AG04450 (cell line): ENCODE measurements at regions of chr20 and their contacts with region 1.

Region 1: GRCh38 chr20:38229376-38230252 is 30.9 kb downstream of the KIAA1755 start:
- DNase-seq: no peak
- H3K4me3 ChIP-seq: no peak overlapping the region
- H3K27ac ChIP-seq: no peak overlapping the region
- H3K27me3 ChIP-seq: no peaks in the 10 kb centered on the region
- CTCF ChIP-seq: peak; percentile 68

Region 2: DNA sequence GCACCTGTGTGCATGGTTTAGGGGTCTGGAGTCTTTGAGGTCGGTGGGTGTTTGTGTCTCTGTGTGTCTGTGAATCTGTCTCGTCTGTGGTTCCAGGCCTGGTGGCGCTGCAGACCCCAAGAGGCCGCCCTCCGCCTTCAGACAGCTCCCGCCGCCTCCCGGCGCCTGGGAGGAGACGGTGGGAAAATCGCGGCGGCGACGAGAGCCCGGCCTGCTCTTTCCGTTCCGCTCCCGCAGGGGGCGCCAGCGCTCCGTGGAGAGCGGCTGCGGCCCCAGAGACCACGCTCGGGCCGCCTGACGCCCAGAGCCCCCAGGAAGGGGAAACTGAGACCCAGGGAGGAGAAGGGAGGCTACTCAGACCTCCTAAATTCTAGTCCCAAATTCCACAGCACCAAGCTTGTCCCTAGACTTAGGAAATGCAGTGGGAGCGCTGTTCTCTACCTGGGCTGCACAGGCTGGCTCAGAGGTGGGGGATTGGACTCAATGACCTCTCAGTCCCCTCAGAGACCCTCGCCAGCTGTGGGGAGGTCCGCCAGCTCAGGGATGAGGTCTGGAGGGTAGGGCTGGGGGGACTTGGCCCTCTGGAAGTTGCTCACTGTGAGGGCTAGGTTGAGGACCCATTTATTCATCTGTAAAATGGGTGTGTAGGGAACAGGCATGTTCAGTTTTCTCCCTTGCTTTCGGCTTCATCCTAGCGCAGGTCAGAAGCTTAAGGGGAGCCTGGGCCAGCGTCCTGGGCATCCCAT is 665.1 kb before region 1 on chr20:
- CTCF ChIA-PET with region 1: interaction called, 21 read pairs
- POLR2A ChIA-PET with region 1: no interaction called
- DNase-seq: no peak
- H3K4me3 ChIP-seq: no peak overlapping the region
- H3K27ac ChIP-seq: no peak overlapping the region
- H3K27me3 ChIP-seq: peaks cover 53% of the 10 kb centered on the region
- CTCF ChIP-seq: peak; percentile 90

Region 3: GRCh38 chr20:38290832-38291581 is 61.4 kb after region 1 on chr20:
- CTCF ChIA-PET with region 1: interaction called, 10 read pairs
- POLR2A ChIA-PET with region 1: interaction called, 4 read pairs
- DNase-seq: peak; percentile 61
- H3K4me3 ChIP-seq: no peak overlapping the region
- H3K27ac ChIP-seq: no peak overlapping the region
- H3K27me3 ChIP-seq: peaks cover 3% of the 10 kb centered on the region
- CTCF ChIP-seq: peak; percentile 58

Region 4: GRCh38 chr20:38325905-38326304 is 96.3 kb after region 1 on chr20:
- CTCF ChIA-PET with region 1: interaction called, 25 read pairs
- POLR2A ChIA-PET with region 1: no interaction called
- DNase-seq: no peak
- H3K4me3 ChIP-seq: no peak overlapping the region
- H3K27ac ChIP-seq: no peak overlapping the region
- H3K27me3 ChIP-seq: peaks cover 37% of the 10 kb centered on the region
- CTCF ChIP-seq: no peak

Region 5: DNA sequence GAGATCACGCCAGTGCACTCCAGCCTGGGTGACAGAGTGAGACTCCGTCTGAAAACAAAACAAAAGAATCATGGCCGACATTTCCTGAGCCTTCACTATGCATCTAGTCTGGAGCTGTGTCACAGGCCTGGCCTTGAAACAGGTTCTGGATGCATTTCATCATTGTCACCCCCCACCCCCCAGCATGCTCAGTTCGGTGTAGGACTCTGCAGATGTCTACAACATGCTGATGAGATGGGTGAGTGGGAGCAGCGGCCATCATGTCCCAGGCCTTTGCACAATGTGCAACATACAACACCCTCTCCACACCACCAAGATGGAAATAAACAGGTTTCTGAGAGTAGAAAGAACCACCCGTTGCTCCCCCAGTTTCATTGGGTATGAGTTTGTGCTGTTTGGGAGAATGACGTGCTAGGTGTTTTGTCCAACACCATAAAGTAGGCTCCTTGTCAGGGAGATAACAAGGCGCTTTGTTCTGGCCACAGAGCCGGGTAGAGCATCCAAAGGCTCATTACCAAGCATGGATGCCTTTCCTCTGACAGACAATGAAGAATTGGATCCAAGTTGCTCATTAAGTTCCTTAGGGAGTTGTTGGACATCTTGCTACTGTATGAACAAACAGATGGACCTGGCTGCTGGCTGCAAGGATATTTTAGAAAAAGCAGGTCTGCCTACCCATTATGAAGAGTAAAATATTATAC is 183.4 kb after region 1 on chr20:
- CTCF ChIA-PET with region 1: interaction called, 29 read pairs
- POLR2A ChIA-PET with region 1: no interaction called
- DNase-seq: no peak
- H3K4me3 ChIP-seq: no peak overlapping the region
- H3K27ac ChIP-seq: no peak overlapping the region
- H3K27me3 ChIP-seq: no peaks in the 10 kb centered on the region
- CTCF ChIP-seq: no peak